ENCODE measurements at regions of chr4 and their contacts with region 1.

Region 1: GRCh38 chr4:184263910-184264732 is 46.4 kb upstream of the ENPP6 start:
- DNase-seq: peak; percentile 97
- H3K4me3 Mint-ChIP-seq: no peak overlapping the region
- H3K27ac Mint-ChIP-seq: peak overlapping the region; percentile 21
- H3K4me1 Mint-ChIP-seq: peaks cover 44% of the 10 kb centered on the region
- H3K27me3 Mint-ChIP-seq: no peaks in the 10 kb centered on the region

Region 2: GRCh38 chr4:183272384-183272783 is 991.7 kb before region 1 on chr4:
- CTCF ChIA-PET with region 1: no interaction called
- POLR2A ChIA-PET with region 1: no interaction called
- DNase-seq: no peak
- H3K4me3 Mint-ChIP-seq: no peak overlapping the region
- H3K27ac Mint-ChIP-seq: no peak overlapping the region
- H3K4me1 Mint-ChIP-seq: no peaks in the 10 kb centered on the region
- H3K27me3 Mint-ChIP-seq: no peaks in the 10 kb centered on the region

Region 3: DNA sequence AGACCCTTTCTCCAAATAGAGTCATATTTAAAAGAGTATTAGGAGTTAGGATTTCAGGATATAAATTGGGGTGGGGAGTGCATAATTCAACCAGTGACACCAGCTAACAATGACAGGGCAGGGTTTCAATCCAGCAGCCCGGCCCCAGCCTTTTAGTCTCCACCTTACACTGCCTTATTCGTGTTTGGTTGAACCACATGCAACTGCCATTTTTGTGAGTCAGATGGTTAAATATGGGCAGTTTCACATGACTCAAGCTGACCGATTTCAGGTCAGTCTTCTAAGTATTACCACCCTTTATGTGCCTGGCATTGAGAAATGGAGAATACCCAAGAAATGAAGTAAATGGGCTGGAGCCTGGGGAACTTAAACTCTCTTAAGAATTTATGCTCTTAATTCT is 256.2 kb before region 1 on chr4:
- CTCF ChIA-PET with region 1: no interaction called
- POLR2A ChIA-PET with region 1: no interaction called
- DNase-seq: no peak
- H3K4me3 Mint-ChIP-seq: no peak overlapping the region
- H3K27ac Mint-ChIP-seq: no peak overlapping the region
- H3K4me1 Mint-ChIP-seq: peaks cover 2% of the 10 kb centered on the region
- H3K27me3 Mint-ChIP-seq: no peaks in the 10 kb centered on the region

Region 4: DNA sequence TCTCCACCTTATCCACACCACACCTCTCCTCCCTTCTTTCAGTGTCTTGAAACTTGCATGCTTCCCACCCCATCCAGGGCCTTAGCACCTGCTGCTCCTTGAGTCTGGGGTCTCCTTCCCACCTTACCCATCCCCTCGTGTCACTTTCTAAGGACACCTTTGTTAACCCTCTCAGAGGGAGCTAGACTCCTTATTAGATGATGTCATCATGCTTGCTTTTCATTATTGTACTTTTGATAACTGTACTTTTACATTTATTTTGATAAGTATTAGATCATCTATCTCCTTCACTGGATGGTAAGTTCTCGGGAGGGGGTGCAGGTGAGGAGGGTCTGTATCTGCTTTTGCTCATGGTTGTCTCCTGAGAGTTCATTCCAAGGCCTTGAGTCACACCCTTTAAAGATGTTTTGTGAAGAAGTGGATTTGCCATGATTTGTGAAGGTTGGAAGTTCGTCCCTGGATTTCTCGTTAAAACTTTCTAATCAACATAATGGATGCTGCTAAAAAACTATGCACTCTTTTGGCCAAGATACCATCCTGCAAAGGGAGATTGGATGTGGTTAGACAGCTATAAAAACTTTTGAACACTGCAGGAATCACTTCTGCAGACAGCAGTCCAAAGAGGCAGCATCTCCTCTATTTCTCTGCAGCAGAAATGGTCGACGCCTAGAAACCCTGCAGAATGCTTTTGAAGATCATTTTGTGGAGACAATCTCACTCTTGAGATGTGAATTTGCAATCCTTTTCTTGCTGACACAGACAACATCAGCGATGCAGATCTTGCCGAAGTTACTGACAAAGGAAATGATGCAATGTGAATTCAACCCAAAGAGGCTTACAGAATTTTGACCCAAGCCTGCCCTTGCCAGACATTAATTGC is 116.0 kb before region 1 on chr4:
- CTCF ChIA-PET with region 1: no interaction called
- POLR2A ChIA-PET with region 1: no interaction called
- DNase-seq: no peak
- H3K4me3 Mint-ChIP-seq: no peak overlapping the region
- H3K27ac Mint-ChIP-seq: no peak overlapping the region
- H3K4me1 Mint-ChIP-seq: peaks cover 14% of the 10 kb centered on the region
- H3K27me3 Mint-ChIP-seq: peaks cover 5% of the 10 kb centered on the region

Region 5: GRCh38 chr4:184231573-184231972 is 32.5 kb before region 1 on chr4:
- CTCF ChIA-PET with region 1: interaction called, 14 read pairs
- POLR2A ChIA-PET with region 1: no interaction called
- DNase-seq: no peak
- H3K4me3 Mint-ChIP-seq: no peak overlapping the region
- H3K27ac Mint-ChIP-seq: no peak overlapping the region
- H3K4me1 Mint-ChIP-seq: peaks cover 43% of the 10 kb centered on the region
- H3K27me3 Mint-ChIP-seq: no peaks in the 10 kb centered on the region

Region 6: GRCh38 chr4:184250795-184251669 is 13.1 kb before region 1 on chr4:
- CTCF ChIA-PET with region 1: interaction called, 60 read pairs
- POLR2A ChIA-PET with region 1: no interaction called
- DNase-seq: peak; percentile 38
- H3K4me3 Mint-ChIP-seq: no peak overlapping the region
- H3K27ac Mint-ChIP-seq: no peak overlapping the region
- H3K4me1 Mint-ChIP-seq: peaks cover 7% of the 10 kb centered on the region
- H3K27me3 Mint-ChIP-seq: peaks cover 6% of the 10 kb centered on the region

Region 7: DNA sequence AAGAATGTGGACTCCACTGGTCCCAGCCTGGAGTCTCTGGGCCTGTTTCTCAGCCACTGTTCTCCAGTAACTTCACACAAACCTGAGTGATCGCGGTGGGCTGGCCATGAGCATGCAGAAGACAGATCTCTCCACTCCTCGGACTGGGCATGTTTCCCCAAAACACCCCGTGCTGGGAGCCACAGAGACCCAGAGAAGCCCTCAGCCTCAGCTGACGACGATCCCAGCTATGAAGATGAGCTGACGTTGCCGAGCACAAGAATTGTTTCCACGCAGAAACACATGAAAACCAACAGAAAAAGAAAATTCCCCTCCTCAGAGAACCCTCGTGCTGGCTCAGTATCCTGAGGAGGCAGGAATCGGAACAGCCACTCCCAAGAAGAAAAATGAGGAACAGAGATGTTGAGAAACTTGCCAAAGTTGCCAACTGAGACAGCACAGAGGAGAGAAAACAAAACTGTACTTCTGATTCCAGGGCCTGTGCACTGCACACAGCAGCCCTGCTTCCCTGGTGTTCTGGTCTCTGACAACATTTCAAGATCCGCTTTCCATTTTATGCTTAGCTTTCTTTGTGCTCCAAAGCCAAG is 128.7 kb after region 1 on chr4:
- CTCF ChIA-PET with region 1: interaction called, 12 read pairs
- POLR2A ChIA-PET with region 1: no interaction called
- DNase-seq: no peak
- H3K4me3 Mint-ChIP-seq: no peak overlapping the region
- H3K27ac Mint-ChIP-seq: no peak overlapping the region
- H3K4me1 Mint-ChIP-seq: peaks cover 14% of the 10 kb centered on the region
- H3K27me3 Mint-ChIP-seq: no peaks in the 10 kb centered on the region

Region 8: GRCh38 chr4:184514121-184514988 is 250.2 kb after region 1 on chr4:
- CTCF ChIA-PET with region 1: interaction called, 11 read pairs
- POLR2A ChIA-PET with region 1: no interaction called
- DNase-seq: peak; percentile 40
- H3K4me3 Mint-ChIP-seq: peak overlapping the region; percentile 35
- H3K27ac Mint-ChIP-seq: peak overlapping the region; percentile 56
- H3K4me1 Mint-ChIP-seq: peaks cover 36% of the 10 kb centered on the region
- H3K27me3 Mint-ChIP-seq: no peaks in the 10 kb centered on the region

Region 9: DNA sequence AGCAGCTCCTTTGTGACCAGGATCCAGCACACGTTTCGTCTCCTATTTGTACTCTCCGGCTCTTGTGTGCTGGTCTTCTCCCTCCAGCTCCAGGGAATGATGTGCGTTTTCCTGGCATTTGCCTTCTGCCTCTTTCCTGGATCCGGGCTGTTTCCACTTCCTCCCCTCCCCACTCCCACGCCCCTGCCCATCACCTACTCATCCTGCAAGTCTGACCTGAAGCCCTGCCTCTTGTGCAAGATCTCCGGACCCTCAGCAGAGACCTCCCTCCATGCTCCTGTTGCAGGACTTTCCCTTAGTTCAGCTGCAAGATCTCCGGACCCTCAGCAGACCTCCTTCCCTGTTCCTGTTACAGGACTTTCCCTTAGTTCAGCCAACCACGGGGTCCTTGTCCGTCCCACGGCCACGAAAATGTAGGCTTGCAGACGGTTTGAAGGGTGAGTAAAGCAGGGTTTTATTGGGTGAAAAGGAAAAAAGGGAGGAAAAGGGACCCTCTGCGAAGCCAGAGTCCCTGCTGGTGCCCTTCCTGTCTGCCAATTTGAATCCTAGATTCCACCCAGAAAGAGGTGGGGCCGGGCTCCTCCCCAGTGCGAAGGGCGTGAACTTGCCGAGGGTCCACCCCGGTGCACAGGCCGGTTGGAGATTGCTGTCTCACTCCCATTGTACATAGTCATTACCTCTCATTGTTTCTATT is 284.7 kb after region 1 on chr4:
- CTCF ChIA-PET with region 1: interaction called, 10 read pairs
- POLR2A ChIA-PET with region 1: no interaction called
- DNase-seq: no peak
- H3K4me3 Mint-ChIP-seq: no peak overlapping the region
- H3K27ac Mint-ChIP-seq: no peak overlapping the region
- H3K4me1 Mint-ChIP-seq: peaks cover 14% of the 10 kb centered on the region
- H3K27me3 Mint-ChIP-seq: peaks cover 5% of the 10 kb centered on the region